ENCODE measurements at regions of chr2 and their contacts with region 1.

Region 1: GRCh38 chr2:8544786-8545694 is 136.8 kb upstream of the ID2 start:
- DNase-seq: peak; percentile 95
- H3K4me3 Mint-ChIP-seq: peak overlapping the region; percentile 64
- H3K27ac Mint-ChIP-seq: peak overlapping the region; percentile 99
- H3K4me1 Mint-ChIP-seq: peaks cover 80% of the 10 kb centered on the region
- H3K27me3 Mint-ChIP-seq: no peaks in the 10 kb centered on the region

Region 2: DNA sequence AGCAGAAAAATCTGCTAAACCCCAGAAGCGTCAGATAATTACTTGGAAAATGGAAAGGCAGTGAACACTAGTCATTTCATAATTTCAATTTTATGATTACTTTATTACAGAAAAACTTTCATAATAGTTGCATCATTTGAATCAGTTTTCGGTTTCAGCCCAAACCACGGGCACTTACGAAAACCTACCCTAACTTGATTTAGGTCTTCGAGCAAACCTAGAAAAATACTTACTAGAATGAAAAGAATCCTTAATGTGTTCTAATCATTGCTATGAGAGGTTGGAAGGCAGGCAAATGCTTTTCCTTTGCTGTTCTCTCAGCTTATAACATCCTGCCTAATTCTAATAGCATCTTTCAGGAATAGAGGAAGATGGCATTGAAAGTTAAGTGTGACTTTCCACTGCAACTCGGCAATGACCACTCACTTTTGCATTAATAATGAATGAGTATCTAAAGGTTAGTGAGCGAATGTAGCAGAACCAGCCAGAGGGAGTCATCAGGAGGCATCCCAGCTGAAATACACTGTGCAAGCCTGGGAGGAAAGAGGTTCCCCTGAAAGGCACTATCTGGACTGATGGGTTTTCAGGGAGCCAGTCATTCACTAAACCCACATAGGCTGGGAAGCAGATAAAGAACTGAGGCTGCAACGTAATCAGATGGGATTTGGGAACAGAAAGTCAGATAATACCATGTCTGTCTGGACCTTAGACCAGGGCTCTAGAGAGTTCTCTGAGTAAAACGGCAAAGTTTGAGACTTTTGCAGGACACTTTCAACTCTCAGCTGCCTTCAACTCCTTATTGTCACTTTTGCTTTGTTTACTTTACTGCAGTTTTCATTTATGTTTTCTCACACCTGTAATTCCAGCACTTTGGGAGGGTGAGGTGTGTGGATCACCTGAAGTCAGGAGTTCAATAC is 1107.1 kb before region 1 on chr2:
- intact Hi-C with region 1: loop called (anchors 2 kb)
- DNase-seq: peak; percentile 75
- H3K4me3 Mint-ChIP-seq: peak overlapping the region; percentile 53
- H3K27ac Mint-ChIP-seq: peak overlapping the region; percentile 96
- H3K4me1 Mint-ChIP-seq: peaks cover 65% of the 10 kb centered on the region
- H3K27me3 Mint-ChIP-seq: no peaks in the 10 kb centered on the region

Region 3: GRCh38 chr2:7497178-7497577 is 1047.9 kb before region 1 on chr2:
- intact Hi-C with region 1: no loop called
- DNase-seq: no peak
- H3K4me3 Mint-ChIP-seq: no peak overlapping the region
- H3K27ac Mint-ChIP-seq: no peak overlapping the region
- H3K4me1 Mint-ChIP-seq: peaks cover 27% of the 10 kb centered on the region
- H3K27me3 Mint-ChIP-seq: no peaks in the 10 kb centered on the region

Region 4: GRCh38 chr2:7725171-7725849 is 819.7 kb before region 1 on chr2:
- intact Hi-C with region 1: loop called (anchors 1 kb)
- DNase-seq: peak; percentile 88
- H3K4me3 Mint-ChIP-seq: peak overlapping the region; percentile 87
- H3K27ac Mint-ChIP-seq: peak overlapping the region; percentile 92
- H3K4me1 Mint-ChIP-seq: peaks cover 53% of the 10 kb centered on the region
- H3K27me3 Mint-ChIP-seq: no peaks in the 10 kb centered on the region

Region 5: DNA sequence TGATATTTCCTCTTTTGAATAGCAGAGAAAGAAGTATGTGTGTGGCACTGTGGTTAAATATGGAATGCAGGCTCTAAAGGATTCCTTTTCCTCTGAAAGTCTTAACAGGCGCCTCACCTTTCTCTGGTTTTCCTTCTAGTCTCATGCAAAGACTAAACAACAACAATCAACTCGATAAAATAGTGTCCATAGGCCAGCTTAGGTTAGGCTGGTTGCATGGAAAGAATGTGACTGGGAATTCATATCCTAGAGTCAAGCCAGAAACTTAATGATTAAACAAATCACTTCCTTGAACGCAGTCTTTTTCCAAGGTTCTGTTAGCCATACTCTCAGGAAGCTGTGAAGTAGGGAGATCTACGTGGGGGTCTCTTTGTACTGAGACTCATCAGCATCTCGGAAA is 664.0 kb before region 1 on chr2:
- intact Hi-C with region 1: no loop called
- DNase-seq: no peak
- H3K4me3 Mint-ChIP-seq: no peak overlapping the region
- H3K27ac Mint-ChIP-seq: no peak overlapping the region
- H3K4me1 Mint-ChIP-seq: no peaks in the 10 kb centered on the region
- H3K27me3 Mint-ChIP-seq: peaks cover 2% of the 10 kb centered on the region

Region 6: DNA sequence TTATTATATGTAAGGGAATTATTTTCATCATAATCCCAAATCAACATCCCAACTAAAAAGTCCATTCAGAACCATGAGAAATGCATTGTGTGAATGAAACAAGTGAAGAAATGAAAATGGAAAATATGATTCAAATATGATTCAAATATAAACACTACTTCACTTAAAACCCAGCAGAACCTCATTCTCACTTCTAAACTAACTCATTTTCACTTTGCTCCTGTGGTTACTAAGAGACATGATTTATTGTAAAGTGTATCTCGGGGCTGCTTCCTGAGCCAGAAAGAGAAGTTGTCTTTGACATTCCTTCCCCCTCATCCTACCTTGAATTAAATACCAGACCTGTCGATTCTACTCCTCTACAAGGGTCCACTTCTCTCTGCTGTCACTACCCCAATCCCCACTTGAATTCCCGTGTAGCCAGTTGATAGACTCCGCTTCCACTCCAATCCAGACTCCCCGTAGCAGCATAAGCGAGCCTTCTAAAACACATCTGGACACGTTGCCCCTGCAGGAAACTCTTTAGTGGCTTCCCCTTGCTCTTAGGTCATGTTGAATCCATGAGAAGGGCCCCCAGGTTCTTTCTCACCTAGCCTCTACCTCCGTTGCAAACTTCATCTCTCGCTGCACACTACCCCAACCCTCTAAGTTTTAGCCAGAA is 560.2 kb before region 1 on chr2:
- intact Hi-C with region 1: loop called (anchors 10 kb)
- DNase-seq: no peak
- H3K4me3 Mint-ChIP-seq: peak overlapping the region; percentile 13
- H3K27ac Mint-ChIP-seq: peak overlapping the region; percentile 87
- H3K4me1 Mint-ChIP-seq: peaks cover 17% of the 10 kb centered on the region
- H3K27me3 Mint-ChIP-seq: no peaks in the 10 kb centered on the region

Region 7: DNA sequence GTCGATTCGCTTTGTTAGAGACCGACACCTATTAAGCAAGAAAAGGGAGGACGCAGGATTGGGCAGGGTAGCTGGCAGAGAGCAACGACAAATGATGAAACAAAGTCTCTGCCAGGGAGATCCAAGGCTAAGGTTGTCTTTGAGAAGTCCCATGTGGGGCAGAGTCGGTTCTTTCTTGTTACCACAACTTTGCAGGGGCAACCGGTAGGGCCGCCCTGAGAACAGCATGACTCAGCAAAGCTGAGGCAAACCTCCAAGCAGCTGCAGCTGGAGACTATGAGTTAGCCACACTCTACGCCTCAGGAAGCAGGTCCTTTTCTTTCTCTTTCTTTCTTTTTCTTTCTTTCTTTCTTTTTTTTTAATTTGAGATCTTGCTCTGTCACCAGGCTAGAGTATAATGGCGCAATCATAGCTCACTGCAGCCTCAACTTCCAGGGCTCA is 315.5 kb before region 1 on chr2:
- intact Hi-C with region 1: no loop called
- DNase-seq: peak; percentile 84
- H3K4me3 Mint-ChIP-seq: peak overlapping the region; percentile 47
- H3K27ac Mint-ChIP-seq: peak overlapping the region; percentile 52
- H3K4me1 Mint-ChIP-seq: peaks cover 12% of the 10 kb centered on the region
- H3K27me3 Mint-ChIP-seq: peaks cover 6% of the 10 kb centered on the region

Region 8: GRCh38 chr2:8334866-8335325 is 210.1 kb before region 1 on chr2:
- intact Hi-C with region 1: loop called (anchors 1 kb)
- DNase-seq: no peak
- H3K4me3 Mint-ChIP-seq: no peak overlapping the region
- H3K27ac Mint-ChIP-seq: no peak overlapping the region
- H3K4me1 Mint-ChIP-seq: peaks cover 19% of the 10 kb centered on the region
- H3K27me3 Mint-ChIP-seq: peaks cover 11% of the 10 kb centered on the region

Region 9: DNA sequence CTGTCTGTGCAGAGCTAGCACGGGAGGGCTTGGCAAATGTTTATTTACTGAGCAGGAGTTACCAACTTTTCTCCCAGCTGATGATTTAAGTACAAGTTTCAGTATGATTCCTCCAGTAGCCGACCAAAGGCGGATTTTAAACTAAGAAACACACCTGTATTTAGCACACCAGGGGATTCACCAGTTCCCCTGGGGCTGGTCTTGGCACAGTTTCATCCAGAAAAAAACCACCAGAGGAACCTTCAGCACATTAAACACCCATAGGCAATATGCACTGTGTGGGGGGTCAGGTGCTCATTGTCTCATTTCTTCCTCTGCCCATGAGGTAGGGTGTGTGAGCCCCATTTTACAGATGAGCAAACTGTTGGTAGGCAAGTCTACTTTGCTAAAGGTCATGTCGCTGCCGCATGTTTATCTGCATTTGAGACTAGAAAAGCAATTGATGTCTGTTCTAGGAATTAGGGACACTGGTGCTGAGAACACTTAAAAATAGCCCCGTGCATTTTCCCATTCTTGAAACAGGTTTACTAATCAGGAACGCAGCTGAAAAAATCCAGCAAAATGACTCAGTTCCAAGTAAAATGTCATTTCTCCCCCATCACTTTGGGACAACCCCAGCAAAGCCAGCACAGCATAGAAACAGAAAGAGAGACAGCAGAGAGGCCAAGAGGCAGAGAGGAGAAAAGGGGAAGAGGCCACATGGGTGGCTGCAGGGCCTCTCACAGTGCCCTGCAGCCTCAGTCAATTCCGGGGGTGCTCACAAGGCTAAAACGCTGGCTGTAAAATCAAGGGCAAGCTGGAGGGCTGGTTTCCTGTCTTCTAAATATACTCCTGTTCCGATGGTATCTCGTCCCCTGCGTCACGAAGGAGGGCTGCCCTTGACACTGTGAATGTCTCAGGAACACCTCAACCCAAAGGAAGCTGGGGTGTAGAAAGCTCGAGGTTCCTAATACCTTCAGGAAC is 30.0 kb before region 1 on chr2:
- intact Hi-C with region 1: loop called (anchors 1 kb)
- DNase-seq: peak; percentile 87
- H3K4me3 Mint-ChIP-seq: peak overlapping the region; percentile 58
- H3K27ac Mint-ChIP-seq: peak overlapping the region; percentile 96
- H3K4me1 Mint-ChIP-seq: peaks cover 63% of the 10 kb centered on the region
- H3K27me3 Mint-ChIP-seq: no peaks in the 10 kb centered on the region

Measured in activated CD4-positive, alpha-beta T cell treated with anti-CD3 and anti-CD28 coated beads, Interleukin-2, amount 10 ng/mL, durations not matched to agents 24 days and 14 days (primary cell).